ENCODE measurements at regions of chrX and their contacts with region 1.

Region 1: DNA sequence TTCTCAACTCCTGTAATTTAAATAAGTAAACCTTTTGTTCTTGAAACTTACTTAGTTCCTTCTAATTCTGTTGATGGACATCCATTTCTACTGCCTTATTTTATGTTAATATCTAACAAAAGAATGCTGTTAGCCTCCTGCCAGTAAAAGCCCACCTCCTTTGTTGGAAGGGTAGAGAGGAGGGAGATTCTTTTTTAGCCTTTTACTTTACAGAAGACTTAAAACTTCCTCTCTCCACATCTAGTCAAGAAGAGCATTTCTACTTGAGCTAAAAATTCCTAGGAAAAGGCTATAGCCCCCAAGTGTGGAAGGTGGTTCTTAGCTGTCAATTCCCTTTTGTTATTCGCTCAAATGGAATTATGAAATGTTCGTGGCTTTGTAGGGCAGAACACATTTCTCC is 118.7 kb downstream of the ZIC3 start:
- DNase-seq: no peak
- ATAC-seq: no peak
- H3K4me3 ChIP-seq: no peak overlapping the region
- H3K27ac ChIP-seq: no peak overlapping the region
- H3K4me1 ChIP-seq: no peaks in the 10 kb centered on the region
- H3K27me3 ChIP-seq: no peaks in the 10 kb centered on the region
- CTCF ChIP-seq: no peak

Region 2: DNA sequence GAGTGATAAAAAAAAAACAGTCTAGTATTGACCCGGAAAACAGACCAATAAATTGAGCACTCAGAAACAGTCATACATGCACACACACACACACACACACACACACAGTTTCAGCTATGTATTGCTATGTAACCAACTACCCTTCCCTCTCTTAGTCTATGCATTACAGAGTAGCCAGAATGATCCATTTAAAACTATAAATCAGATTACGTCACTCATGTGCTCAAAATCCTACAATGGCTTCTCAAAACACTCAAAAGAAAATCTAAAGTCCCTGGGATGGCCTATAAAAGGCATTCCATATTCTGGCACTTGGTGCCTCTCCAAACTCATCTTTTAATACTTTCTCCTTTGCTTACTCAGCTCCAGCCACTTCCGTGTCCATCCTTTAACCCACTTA is 165.1 kb before region 1 on chrX:
- CTCF ChIA-PET with region 1: no interaction called
- POLR2A ChIA-PET with region 1: no interaction called
- intact Hi-C with region 1: no loop called
- DNase-seq: no peak
- ATAC-seq: no peak
- H3K4me3 ChIP-seq: no peak overlapping the region
- H3K27ac ChIP-seq: no peak overlapping the region
- H3K4me1 ChIP-seq: no peaks in the 10 kb centered on the region
- H3K27me3 ChIP-seq: peaks cover 13% of the 10 kb centered on the region
- CTCF ChIP-seq: no peak

Region 3: DNA sequence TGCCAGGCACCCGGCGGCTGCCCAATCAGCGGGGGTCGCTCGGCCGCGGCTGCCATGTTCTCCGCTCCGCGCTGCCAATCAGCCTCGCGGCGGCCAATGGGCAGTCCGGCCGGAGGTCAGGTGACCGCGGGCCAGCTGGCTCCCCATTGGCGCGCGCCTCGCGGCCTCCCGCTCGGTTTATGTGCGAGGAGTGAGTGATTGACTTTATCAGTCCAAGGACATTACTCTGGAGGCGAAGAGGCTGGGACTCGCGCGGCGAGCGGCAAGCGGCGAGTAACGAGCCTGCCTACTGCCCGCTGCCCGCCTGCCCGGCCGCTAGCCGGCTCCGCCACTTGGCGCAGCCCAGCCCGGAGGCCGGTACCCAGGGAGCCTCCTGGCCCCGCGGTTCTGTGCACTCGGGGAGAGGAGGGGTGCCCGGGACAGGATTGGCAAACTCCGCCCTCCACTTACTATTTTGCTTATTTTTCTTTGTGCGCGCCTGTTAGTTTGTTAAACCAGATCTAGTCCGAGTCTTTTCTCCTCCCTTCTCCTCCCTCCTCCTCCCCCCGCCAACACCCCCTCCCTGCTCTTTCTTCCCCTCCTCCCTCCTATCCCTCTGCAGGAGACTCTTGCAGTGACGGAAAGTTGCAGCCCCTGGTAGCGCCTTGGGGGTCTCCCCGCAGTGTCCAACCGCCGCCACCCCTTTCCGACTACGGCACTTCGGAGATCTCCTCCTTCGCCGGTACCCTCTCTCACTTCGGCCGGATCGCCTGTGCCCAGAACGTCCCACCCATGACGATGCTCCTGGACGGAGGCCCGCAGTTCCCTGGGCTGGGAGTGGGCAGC is 118.5 kb before region 1 on chrX and contains the start of gene ZIC3:
- CTCF ChIA-PET with region 1: no interaction called
- POLR2A ChIA-PET with region 1: interaction called, 31 read pairs
- intact Hi-C with region 1: no loop called
- DNase-seq: peak; percentile 50
- ATAC-seq: peak; percentile 83
- H3K4me3 ChIP-seq: peak within 1 kb of the TSS; percentile 63
- H3K27ac ChIP-seq: no peak within 1 kb of the TSS
- H3K4me1 ChIP-seq: 0 out of 2 replicates have a peak, but pooled peaks cover 3% of the 10 kb centered on the region
- H3K27me3 ChIP-seq: peaks cover 66% of the 10 kb centered on the region
- CTCF ChIP-seq: no peak
- total RNA-seq, gene ZIC3: not detected in 2 replicates

Measured in PC-3 (cell line).